Left ventricle myocardium inferior (tissue), 1 donor: ENCODE measurements at regions of chr4 and their contacts with region 1.

Region 1: DNA sequence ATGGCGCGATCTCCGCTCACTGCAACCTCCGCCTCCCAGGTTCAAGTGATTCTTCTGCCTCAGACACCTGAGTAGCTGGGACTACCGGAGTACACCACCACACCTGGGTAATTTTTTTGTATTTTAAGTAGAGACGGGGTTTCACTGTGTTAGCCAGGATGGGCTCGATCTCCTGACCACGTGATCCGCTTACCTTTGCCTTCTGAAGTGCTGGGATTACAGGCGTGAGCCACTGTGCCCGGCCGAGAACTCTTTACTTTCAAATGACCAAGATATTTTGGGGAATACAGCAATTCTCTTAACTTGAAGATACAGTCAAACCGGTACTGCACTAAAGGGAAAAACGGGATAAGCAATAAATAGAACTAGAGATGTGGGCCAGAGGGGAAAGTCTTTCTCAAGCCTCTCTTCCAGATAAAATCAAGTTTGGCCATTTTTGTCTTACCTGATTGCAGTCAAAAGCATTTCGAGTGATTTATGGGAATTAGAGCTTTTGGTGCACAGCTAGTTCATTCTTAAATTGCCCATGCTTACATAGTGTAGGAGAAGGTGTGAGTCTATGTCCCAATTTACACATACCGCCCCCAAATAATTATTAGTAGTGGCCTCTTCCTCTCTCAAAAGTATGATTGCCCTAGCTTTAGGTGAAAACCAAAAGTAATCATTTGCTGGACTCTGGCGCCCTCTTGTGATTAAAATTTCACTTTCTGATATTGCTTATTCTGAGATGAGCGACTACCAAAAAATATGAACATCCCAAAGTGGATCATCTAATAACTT is 53.2 kb upstream of the ABCG2 start:
- DNase-seq: no peak
- H3K4me3 ChIP-seq: no peak overlapping the region
- H3K27ac ChIP-seq: no peak overlapping the region
- H3K4me1 ChIP-seq: no peaks in the 10 kb centered on the region
- H3K27me3 ChIP-seq: no peaks in the 10 kb centered on the region
- CTCF ChIP-seq: peak; percentile 79

Region 2: GRCh38 chr4:87848622-87849351 is 362.9 kb before region 1 on chr4:
- intact Hi-C with region 1: loop called (anchors 5 kb)
- DNase-seq: peak; percentile 15
- H3K4me3 ChIP-seq: peak overlapping the region; percentile 46
- H3K27ac ChIP-seq: peak overlapping the region; percentile 37
- H3K4me1 ChIP-seq: peaks cover 16% of the 10 kb centered on the region
- H3K27me3 ChIP-seq: no peaks in the 10 kb centered on the region
- CTCF ChIP-seq: peak; percentile 73

Region 3: DNA sequence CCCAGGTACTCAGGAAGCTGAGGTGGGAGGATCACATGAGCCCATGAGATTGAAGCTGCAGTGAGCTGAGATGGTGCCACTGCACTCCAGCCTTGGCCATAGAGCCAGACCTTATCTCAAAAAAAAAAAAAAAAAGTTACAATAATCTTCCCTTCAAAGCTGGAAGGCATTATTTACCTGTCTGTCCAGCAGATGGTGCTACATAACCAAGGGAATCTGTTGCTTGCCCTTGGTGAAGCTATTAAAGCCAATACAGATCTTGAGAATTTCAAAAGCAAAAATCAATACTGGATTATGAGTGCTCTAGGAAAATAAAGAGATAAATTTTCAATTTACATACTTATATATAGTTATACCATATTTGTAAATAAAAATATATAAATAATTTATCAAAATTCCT is 178.4 kb before region 1 on chr4:
- intact Hi-C with region 1: loop called (anchors 2 kb)
- DNase-seq: no peak
- H3K4me3 ChIP-seq: no peak overlapping the region
- H3K27ac ChIP-seq: no peak overlapping the region
- H3K4me1 ChIP-seq: peaks cover 4% of the 10 kb centered on the region
- H3K27me3 ChIP-seq: no peaks in the 10 kb centered on the region
- CTCF ChIP-seq: peak; percentile 76

Region 4: DNA sequence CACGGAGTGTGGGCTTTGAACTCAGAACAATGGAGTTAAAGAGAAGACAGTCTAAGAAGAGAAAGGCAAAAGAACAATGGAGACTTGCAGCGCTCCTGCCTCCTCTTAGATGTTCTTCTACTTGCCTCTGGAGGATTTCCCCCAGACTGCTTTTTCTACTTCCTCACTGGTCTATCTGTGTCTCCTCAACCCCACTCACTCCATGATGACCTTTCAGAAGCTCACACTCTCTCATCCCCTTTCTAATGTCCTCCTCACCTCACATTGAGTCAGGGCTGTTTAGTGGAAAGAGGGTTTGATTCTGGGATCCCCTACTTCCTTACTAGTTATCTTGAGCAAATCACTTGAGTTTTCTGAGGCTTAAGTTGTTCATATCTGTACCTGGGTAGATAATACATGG is 154.8 kb after region 1 on chr4:
- intact Hi-C with region 1: loop called (anchors 10 kb)
- DNase-seq: no peak
- H3K4me3 ChIP-seq: no peak overlapping the region
- H3K27ac ChIP-seq: no peak overlapping the region
- H3K4me1 ChIP-seq: peaks cover 8% of the 10 kb centered on the region
- H3K27me3 ChIP-seq: no peaks in the 10 kb centered on the region
- CTCF ChIP-seq: no peak